ENCODE measurements at regions of chr22 and their contacts with region 1.

Region 1: GRCh38 chr22:29883045-29883774 is at the start of gene MTMR3:
- DNase-seq: peak; percentile 92 to 95 (median 94)
- ATAC-seq: peak; percentile 90
- H3K4me3 ChIP-seq: peak within 1 kb of the TSS; percentile 82 to 87
- H3K27ac ChIP-seq: peak within 1 kb of the TSS; percentile 91 to 97 (median 94)
- H3K4me1 ChIP-seq: peaks cover 38% of the 10 kb centered on the region
- H3K27me3 ChIP-seq: no peaks in the 10 kb centered on the region
- CTCF ChIP-seq: peak; percentile 32 to 53 (median 43)
- POLR2A ChIP-seq: peak; percentile 65 to 81 (median 81)
- total RNA-seq, gene MTMR3: 37.9 to 46.7 TPM

Region 2: GRCh38 chr22:30005213-30005857 is 122.1 kb after region 1 on chr22:
- intact Hi-C with region 1: loop called (anchors 10 kb)
- DNase-seq: peak; percentile 67 to 81 (median 78)
- ATAC-seq: peak; percentile 79
- H3K4me3 ChIP-seq: no peak overlapping the region
- H3K27ac ChIP-seq: no peak overlapping the region
- H3K4me1 ChIP-seq: peaks cover 4% of the 10 kb centered on the region
- H3K27me3 ChIP-seq: no peaks in the 10 kb centered on the region
- CTCF ChIP-seq: peak; percentile 79 to 94 (median 87)
- POLR2A ChIP-seq: no peak

Region 3: DNA sequence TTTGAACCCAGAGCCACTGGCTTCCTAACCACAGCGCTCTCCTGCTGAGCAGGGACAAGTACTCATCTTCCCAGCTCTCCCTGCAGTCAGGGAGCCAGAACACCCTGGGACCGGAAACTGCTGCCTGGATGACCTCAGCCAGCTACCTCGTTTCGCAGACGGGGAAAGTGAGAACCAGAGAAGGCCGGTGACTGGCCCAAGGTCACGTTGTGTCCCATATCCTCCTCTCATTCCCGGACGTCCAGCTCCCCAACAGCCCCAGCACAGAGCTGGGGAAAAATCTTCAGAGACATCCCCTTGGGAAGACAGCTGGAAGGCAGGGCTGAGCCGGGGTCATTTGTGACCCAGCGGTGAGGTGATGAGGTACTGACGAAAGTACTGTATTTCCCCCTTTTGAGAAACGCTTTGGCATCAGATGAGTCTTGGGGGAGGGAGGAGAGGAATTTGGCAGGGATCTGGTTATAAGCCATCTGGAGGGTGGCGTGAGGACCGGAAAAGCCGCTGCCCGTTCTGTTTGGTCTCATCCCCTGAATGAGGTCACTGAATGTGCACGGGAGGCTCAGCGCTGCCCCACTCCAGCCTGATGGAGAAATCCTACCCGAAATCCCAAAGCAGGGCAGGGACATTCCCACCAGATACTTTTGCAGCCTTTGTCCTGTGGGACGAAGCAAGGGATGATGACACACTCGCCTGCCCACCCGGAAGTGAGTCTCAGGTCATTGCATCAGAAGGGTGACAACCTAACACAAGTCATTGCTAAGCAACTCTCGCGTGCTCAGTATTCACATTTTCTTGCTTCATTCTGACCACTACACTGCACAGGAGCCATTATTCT is 322.3 kb after region 1 on chr22:
- intact Hi-C with region 1: no loop called
- DNase-seq: peak in 2 of 4 donors; percentile 25 to 53
- ATAC-seq: peak; percentile 26
- H3K4me3 ChIP-seq: no peak overlapping the region
- H3K27ac ChIP-seq: peak overlapping the region; percentile 3 to 71 (median 42)
- H3K4me1 ChIP-seq: peaks cover 38% of the 10 kb centered on the region
- H3K27me3 ChIP-seq: no peaks in the 10 kb centered on the region
- CTCF ChIP-seq: no peak
- POLR2A ChIP-seq: no peak

Measured in body of pancreas (tissue), 4 donors.